Activated CD4-positive, alpha-beta memory T cell treated with anti-CD3 and anti-CD28 coated beads for 36 hours (primary cell): ENCODE measurements at regions of chr2 and their contacts with region 1.

Region 1: GRCh38 chr2:157433394-157433793 is 10.5 kb downstream of the CYTIP start:
- DNase-seq: no peak
- H3K4me3 Mint-ChIP-seq: peak overlapping the region; percentile 92
- H3K27ac Mint-ChIP-seq: peak overlapping the region; percentile 99
- H3K4me1 Mint-ChIP-seq: peaks cover 69% of the 10 kb centered on the region
- H3K27me3 Mint-ChIP-seq: no peaks in the 10 kb centered on the region

Region 2: DNA sequence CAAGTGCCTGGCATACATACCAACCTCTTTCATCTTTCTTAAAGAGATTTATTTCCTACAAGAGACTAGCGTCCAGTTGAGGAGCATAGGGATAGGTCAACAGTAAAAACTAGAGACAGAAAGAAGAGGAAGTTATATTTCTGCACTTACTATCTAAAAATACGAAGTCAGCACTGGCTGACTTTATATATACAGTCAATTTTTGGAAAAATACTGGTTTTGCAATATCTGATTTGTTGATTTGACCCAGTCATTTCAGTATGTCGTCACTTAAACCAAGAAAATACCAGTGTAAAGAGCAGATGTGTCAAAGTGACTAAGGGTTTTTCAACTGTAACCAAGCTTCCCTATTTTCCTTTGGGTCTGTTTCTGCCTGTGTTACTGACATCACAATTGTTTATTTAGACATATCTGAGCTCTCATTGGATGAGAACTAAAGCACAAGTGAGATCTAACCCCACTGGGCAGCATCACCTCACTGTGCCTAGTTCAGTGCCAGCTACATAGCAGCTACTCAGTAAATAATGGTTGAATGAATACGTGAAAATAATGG is 12.5 kb before region 1 on chr2:
- CTCF ChIA-PET with region 1: interaction called, 11 read pairs
- POLR2A ChIA-PET with region 1: interaction called, 319 read pairs
- intact Hi-C with region 1: no loop called
- DNase-seq: peak; percentile 61
- H3K4me3 Mint-ChIP-seq: peak overlapping the region; percentile 38
- H3K27ac Mint-ChIP-seq: peak overlapping the region; percentile 97
- H3K4me1 Mint-ChIP-seq: peaks cover 74% of the 10 kb centered on the region
- H3K27me3 Mint-ChIP-seq: no peaks in the 10 kb centered on the region